ENCODE measurements at regions of chr11 and their contacts with region 1.

Region 1: DNA sequence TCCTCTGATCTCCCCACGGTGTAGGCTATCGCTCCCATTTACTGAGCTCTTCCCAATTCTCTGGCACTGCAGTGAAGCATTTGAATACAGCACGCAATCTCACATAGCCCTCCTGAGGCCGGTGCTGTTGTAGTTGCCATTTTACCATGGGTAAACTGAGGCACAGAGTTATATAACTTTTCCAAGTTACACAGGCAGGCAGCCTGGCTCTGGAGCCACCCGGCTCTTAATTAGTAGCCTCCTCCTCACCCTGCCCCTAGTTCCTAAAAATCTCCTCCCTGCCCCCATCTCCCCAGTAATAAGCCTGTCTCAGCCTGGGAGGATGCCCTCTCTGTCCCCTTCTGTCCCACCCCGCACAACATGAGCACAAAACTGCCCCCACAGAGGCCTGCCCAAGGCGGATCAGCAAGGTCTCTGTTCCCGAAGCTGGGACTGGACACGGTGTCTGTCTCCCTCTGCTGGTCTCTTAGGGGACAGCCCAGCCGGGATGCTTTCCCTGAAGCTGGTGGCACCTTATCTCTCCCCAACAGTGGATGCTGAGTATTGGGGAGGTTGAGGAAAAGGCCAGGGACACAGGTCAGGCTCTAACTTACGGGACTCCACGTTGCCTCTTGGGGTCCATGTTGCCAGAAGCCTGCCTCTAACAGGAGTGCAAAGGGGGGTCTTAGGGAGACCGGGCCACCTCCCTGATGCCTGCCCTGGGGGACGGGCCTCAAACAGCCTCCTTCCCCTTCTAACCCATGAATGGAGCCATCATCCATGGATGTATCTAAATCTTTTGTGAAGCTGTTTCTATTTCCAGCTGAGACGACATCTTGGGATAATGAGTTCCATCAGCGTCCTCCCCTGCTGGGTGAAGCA is 9.1 kb upstream of the CLCF1 start:
- DNase-seq: peak; percentile 77 to 89 (median 87)
- H3K4me3 ChIP-seq: no peak overlapping the region
- H3K27ac ChIP-seq: no peak overlapping the region
- H3K4me1 ChIP-seq: peaks cover 0 to 5% (median 0%) of the 10 kb centered on the region in 3 donors
- H3K27me3 ChIP-seq: no peaks in the 10 kb centered on the region
- CTCF ChIP-seq: peak; percentile 98

Region 2: GRCh38 chr11:67345920-67346799 is 36.3 kb before region 1 on chr11:
- intact Hi-C with region 1: loop called (anchors 5 kb)
- DNase-seq: peak in 2 of 5 donors; percentile 51
- H3K4me3 ChIP-seq: no peak overlapping the region
- H3K27ac ChIP-seq: no peak overlapping the region
- H3K4me1 ChIP-seq: peaks cover 0 to 5% (median 0%) of the 10 kb centered on the region in 3 donors
- H3K27me3 ChIP-seq: no peaks in the 10 kb centered on the region
- CTCF ChIP-seq: peak; percentile 64

Region 3: GRCh38 chr11:67640021-67640757 is 257.7 kb after region 1 on chr11:
- intact Hi-C with region 1: no loop called
- DNase-seq: peak; percentile 64 to 82 (median 72)
- H3K4me3 ChIP-seq: no peak overlapping the region
- H3K27ac ChIP-seq: no peak overlapping the region
- H3K4me1 ChIP-seq: no peaks in the 10 kb centered on the region
- H3K27me3 ChIP-seq: no peaks in the 10 kb centered on the region
- CTCF ChIP-seq: peak; percentile 59